Transverse colon (tissue), 4 donors: ENCODE measurements at regions of chr10 and their contacts with region 1.

Region 1: DNA sequence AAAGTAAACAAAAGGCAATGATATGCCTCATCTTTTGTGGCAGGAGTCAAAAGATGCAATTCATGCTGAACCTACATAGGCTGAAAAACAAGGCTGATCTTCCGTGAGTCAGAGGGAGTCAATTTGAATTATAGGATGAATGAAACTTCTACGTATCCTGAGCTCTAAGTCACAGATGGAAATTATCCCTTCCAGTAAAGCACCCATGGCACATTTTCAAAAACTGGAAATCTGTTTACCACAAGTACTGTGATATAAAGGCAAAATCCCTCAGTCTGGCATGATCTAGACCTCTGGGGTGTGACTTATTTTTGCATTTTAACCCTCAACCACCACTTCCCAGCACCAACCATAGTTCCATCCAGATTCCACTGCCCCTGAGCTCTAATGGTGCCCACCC is 69.6 kb downstream of the NRG3 start:
- DNase-seq: no peak
- H3K4me3 ChIP-seq: no peak overlapping the region
- H3K27ac ChIP-seq: no peak overlapping the region
- H3K4me1 ChIP-seq: no peaks in the 10 kb centered on the region
- H3K27me3 ChIP-seq: no peaks in the 10 kb centered on the region
- CTCF ChIP-seq: no peak
- EP300 ChIP-seq: no peak
- POLR2A ChIP-seq: no peak

Region 2: DNA sequence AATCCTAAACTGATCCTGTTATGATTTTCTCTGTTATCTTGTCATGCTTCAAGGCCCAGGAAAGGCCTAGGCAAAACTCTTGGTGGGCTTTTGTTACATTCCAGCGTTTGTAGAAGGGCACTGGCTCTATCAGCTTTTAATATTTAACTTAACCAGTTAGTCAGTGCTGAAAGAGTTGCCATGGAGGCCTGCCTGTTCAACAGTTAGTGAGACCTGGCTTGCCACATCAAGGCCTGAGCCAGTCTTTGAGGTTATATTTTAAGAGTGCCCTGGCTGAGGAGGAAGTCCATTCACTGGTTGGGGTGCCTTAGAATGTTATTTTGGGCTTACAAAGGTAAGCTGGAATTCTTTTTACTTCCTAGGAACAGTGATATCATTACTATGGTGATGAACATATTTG is 213.7 kb before region 1 on chr10:
- in situ Hi-C with region 1: no loop called
- intact Hi-C with region 1: loop called (anchors 5 kb)
- DNase-seq: no peak
- H3K4me3 ChIP-seq: no peak overlapping the region
- H3K27ac ChIP-seq: no peak overlapping the region
- H3K4me1 ChIP-seq: no peaks in the 10 kb centered on the region
- H3K27me3 ChIP-seq: no peaks in the 10 kb centered on the region
- CTCF ChIP-seq: no peak
- EP300 ChIP-seq: no peak
- POLR2A ChIP-seq: no peak

Region 3: GRCh38 chr10:81814691-81815241 is 129.8 kb before region 1 on chr10:
- in situ Hi-C with region 1: no loop called
- intact Hi-C with region 1: no loop called
- DNase-seq: no peak
- H3K4me3 ChIP-seq: no peak overlapping the region
- H3K27ac ChIP-seq: no peak overlapping the region
- H3K4me1 ChIP-seq: no peaks in the 10 kb centered on the region
- H3K27me3 ChIP-seq: no peaks in the 10 kb centered on the region
- CTCF ChIP-seq: no peak
- EP300 ChIP-seq: no peak
- POLR2A ChIP-seq: no peak

Region 4: GRCh38 chr10:82353381-82353780 is 408.8 kb after region 1 on chr10:
- in situ Hi-C with region 1: no loop called
- intact Hi-C with region 1: no loop called
- DNase-seq: no peak
- H3K4me3 ChIP-seq: no peak overlapping the region
- H3K27ac ChIP-seq: no peak overlapping the region
- H3K4me1 ChIP-seq: no peaks in the 10 kb centered on the region
- H3K27me3 ChIP-seq: no peaks in the 10 kb centered on the region
- CTCF ChIP-seq: no peak
- EP300 ChIP-seq: no peak
- POLR2A ChIP-seq: no peak